CD8-positive, alpha-beta T cell (primary cell): ENCODE measurements at regions of chr19 and their contacts with region 1.

Region 1: GRCh38 chr19:49676690-49677231 is 310 bp upstream of the PRMT1 start:
- DNase-seq: peak; percentile 96 to 100 (median 98)
- ATAC-seq: peak; percentile 75
- H3K4me3 ChIP-seq: peak overlapping the region; percentile 83 to 99
- H3K4me3 Mint-ChIP-seq: peak overlapping the region; percentile 99
- H3K27ac ChIP-seq: peak overlapping the region; percentile 86 to 99
- H3K27ac Mint-ChIP-seq: peak overlapping the region; percentile 99
- H3K4me1 ChIP-seq: peaks cover 40% of the 10 kb centered on the region
- H3K4me1 Mint-ChIP-seq: peaks cover 43% of the 10 kb centered on the region
- H3K27me3 ChIP-seq: no peaks in the 10 kb centered on the region
- H3K27me3 Mint-ChIP-seq: no peaks in the 10 kb centered on the region
- CTCF ChIP-seq: no peak

Region 2: GRCh38 chr19:49391581-49392399 is 285.0 kb before region 1 on chr19:
- CTCF ChIA-PET with region 1: interaction called, 4 read pairs
- POLR2A ChIA-PET with region 1: no interaction called
- intact Hi-C with region 1: loop called (anchors 1 to 5 kb)
- DNase-seq: peak; percentile 61 to 89 (median 81)
- ATAC-seq: peak; percentile 80
- H3K4me3 ChIP-seq: no peak overlapping the region
- H3K4me3 Mint-ChIP-seq: no peak overlapping the region
- H3K27ac ChIP-seq: peak overlapping the region in 1 of 2 experiments; percentile 20
- H3K27ac Mint-ChIP-seq: peak overlapping the region; percentile 46
- H3K4me1 ChIP-seq: peaks cover 16% of the 10 kb centered on the region
- H3K4me1 Mint-ChIP-seq: peaks cover 11% of the 10 kb centered on the region
- H3K27me3 ChIP-seq: no peaks in the 10 kb centered on the region
- H3K27me3 Mint-ChIP-seq: no peaks in the 10 kb centered on the region
- CTCF ChIP-seq: peak; percentile 95

Region 3: DNA sequence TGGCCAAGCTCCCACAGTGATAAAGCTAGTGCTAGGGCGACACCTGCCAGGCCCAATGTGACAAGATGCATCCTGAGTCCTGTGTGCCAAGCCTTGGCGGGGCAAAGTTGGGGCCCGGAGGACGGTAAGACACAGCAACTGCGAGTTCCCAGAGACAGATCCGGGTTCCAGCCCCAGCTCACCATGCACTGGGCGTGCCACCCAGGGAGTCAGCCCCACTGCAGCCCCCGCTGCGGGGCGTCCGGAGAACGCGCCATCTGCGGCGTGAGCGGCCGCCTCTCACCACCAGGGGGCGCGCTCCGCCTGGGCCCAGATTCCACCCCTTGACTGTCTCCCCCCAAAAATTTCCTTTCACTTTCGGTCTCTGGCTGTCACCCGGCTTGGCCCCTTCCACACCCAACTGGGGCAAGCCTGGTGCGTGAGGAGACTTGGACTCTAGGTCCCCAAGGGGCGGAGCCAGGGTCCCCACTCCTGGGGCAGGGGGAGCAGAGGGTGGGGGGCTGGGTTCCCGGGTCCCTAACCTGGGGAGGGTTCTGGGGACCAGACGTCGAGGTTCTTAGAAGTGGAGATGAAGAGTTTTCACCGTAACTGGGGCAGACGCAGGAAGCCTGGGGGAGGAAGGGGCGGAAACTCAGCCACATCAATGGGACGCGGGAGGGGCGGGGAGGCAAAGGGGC is 202.8 kb before region 1 on chr19 and contains the start of gene FLT3LG:
- CTCF ChIA-PET with region 1: interaction called, 6 read pairs
- POLR2A ChIA-PET with region 1: interaction called, 4 read pairs
- intact Hi-C with region 1: loop called in 1 of 2 experiments (anchors 1 kb)
- DNase-seq: peak; percentile 83 to 97 (median 91)
- ATAC-seq: peak; percentile 58
- H3K4me3 ChIP-seq: peak within 1 kb of the TSS; percentile 88 to 98
- H3K4me3 Mint-ChIP-seq: peak within 1 kb of the TSS; percentile 91
- H3K27ac ChIP-seq: peak within 1 kb of the TSS; percentile 92 to 96
- H3K27ac Mint-ChIP-seq: peak within 1 kb of the TSS; percentile 98
- H3K4me1 ChIP-seq: peaks cover 53% of the 10 kb centered on the region
- H3K4me1 Mint-ChIP-seq: peaks cover 54% of the 10 kb centered on the region
- H3K27me3 ChIP-seq: no peaks in the 10 kb centered on the region
- H3K27me3 Mint-ChIP-seq: no peaks in the 10 kb centered on the region
- CTCF ChIP-seq: peak; percentile 83
- total RNA-seq, gene FLT3LG: 246 to 259 TPM

Region 4: GRCh38 chr19:49570138-49570856 is 106.5 kb before region 1 on chr19:
- CTCF ChIA-PET with region 1: interaction called, 59 read pairs
- POLR2A ChIA-PET with region 1: interaction called, 4 read pairs
- intact Hi-C with region 1: loop called in 1 of 2 experiments (anchors 2 kb)
- DNase-seq: peak in 8 of 9 experiments; percentile 54 to 94 (median 74)
- ATAC-seq: peak; percentile 36
- H3K4me3 ChIP-seq: no peak overlapping the region
- H3K4me3 Mint-ChIP-seq: peak overlapping the region; percentile 68
- H3K27ac ChIP-seq: no peak overlapping the region
- H3K27ac Mint-ChIP-seq: peak overlapping the region; percentile 89
- H3K4me1 ChIP-seq: peaks cover 59% of the 10 kb centered on the region
- H3K4me1 Mint-ChIP-seq: peaks cover 49% of the 10 kb centered on the region
- H3K27me3 ChIP-seq: no peaks in the 10 kb centered on the region
- H3K27me3 Mint-ChIP-seq: no peaks in the 10 kb centered on the region
- CTCF ChIP-seq: peak; percentile 100

Region 5: DNA sequence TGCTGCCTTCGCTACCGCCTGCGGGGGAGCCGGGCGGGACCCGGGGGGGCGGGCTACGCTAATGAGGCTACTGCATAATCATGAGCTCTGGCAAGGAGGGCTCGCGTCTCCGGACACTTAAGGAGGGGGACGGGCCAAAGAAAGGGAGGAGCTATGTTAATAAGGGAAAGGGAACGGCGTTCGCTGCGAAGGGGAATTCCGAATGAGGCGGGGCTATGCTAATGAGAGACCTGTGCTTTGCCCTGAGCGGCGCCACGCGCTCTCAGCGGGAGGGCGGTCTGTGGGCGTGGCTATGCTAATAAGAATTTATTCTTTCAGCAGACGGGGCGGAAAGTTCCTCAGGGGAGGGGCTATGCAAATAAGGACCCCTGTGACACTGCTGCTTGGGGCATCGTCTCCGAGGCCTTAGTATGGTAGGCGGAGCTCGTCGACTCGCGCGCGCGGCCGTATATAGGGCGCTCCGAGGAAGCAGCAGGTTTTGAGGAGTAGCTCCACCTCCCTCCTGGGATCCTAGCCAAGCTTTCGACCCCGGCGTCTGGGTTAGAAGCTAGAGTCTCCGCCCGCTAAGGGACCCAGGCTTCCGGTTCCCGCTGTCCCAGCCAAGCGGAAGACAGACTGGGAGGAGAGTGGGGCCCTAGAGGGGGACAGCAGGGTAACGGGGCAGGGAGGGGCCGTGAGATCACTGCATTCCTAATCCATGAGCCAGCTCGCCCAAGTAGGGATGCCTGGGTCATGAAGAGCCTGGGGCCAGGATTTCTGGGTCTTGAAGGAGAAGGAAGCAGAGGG is 36.5 kb before region 1 on chr19 and contains the start of gene RRAS:
- CTCF ChIA-PET with region 1: interaction called, 22 read pairs
- POLR2A ChIA-PET with region 1: interaction called, 8 read pairs
- intact Hi-C with region 1: loop called (anchors 1 kb)
- DNase-seq: peak; percentile 98 to 100 (median 99)
- ATAC-seq: peak; percentile 66
- H3K4me3 ChIP-seq: peak within 1 kb of the TSS; percentile 64 to 75
- H3K4me3 Mint-ChIP-seq: peak within 1 kb of the TSS; percentile 95
- H3K27ac ChIP-seq: peak within 1 kb of the TSS; percentile 64 to 98
- H3K27ac Mint-ChIP-seq: peak within 1 kb of the TSS; percentile 96
- H3K4me1 ChIP-seq: peaks cover 51% of the 10 kb centered on the region
- H3K4me1 Mint-ChIP-seq: peaks cover 58% of the 10 kb centered on the region
- H3K27me3 ChIP-seq: no peaks in the 10 kb centered on the region
- H3K27me3 Mint-ChIP-seq: no peaks in the 10 kb centered on the region
- CTCF ChIP-seq: no peak
- total RNA-seq, gene RRAS: 3.6 to 4.9 TPM

Region 6: DNA sequence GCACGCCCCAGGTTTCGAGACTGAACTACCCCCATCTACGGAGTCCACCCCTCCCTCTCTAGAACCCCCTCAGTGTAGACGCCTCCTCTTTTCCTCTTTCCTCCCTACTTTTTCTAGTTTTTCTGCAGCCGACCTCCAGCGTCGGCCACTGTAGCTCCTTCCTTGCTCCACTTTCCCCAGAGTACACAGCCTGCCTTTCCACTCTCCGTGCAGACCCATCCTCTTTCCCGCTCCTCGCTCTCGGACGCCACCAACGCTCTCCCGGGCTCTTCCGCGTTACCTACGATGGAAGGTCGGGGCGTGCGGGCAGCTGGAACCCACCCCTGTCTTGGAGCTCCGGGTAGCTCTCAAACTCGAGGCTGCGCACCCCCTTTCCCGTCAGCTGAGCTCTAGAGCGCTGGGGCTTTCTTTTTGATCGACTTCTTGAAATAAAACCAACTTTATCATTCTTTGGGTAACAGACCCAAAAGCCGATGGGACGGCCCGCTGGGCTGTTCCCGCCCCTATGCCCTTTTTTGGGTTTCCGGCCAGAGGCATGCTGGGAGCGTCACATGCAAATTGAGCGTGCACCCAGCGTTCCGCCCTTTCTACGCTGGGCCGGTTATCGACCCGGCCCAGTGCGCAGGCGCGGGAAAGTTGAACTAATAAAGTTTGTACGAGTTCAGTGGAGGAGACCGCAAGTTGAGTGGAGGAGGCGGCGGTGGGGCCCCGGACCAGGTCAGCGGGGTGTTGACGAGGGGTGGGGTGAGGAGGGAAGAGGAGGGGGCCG is 11.2 kb before region 1 on chr19 and contains the starts of genes BCL2L12 and IRF3:
- CTCF ChIA-PET with region 1: interaction called, 19 read pairs
- POLR2A ChIA-PET with region 1: interaction called, 29 read pairs
- intact Hi-C with region 1: loop called (anchors 1 kb)
- DNase-seq: peak; percentile 98 to 100 (median 99)
- ATAC-seq: peak; percentile 80
- H3K4me3 ChIP-seq: peak within 1 kb of the TSS; percentile 86 to 95
- H3K4me3 Mint-ChIP-seq: peak within 1 kb of the TSS; percentile 99
- H3K27ac ChIP-seq: peak within 1 kb of the TSS; percentile 77 to 93
- H3K27ac Mint-ChIP-seq: peak within 1 kb of the TSS; percentile 99
- H3K4me1 ChIP-seq: peaks cover 29% of the 10 kb centered on the region
- H3K4me1 Mint-ChIP-seq: peaks cover 38% of the 10 kb centered on the region
- H3K27me3 ChIP-seq: no peaks in the 10 kb centered on the region
- H3K27me3 Mint-ChIP-seq: no peaks in the 10 kb centered on the region
- CTCF ChIP-seq: no peak
- total RNA-seq, gene BCL2L12: 13.1 to 14.7 TPM
- total RNA-seq, gene IRF3: 92.0 to 99.5 TPM

Region 7: GRCh38 chr19:49877020-49877878 is 200.5 kb after region 1 on chr19 and contains the starts of genes AKT1S1 and TBC1D17:
- CTCF ChIA-PET with region 1: no interaction called
- POLR2A ChIA-PET with region 1: no interaction called
- intact Hi-C with region 1: loop called in 1 of 2 experiments (anchors 1 kb)
- DNase-seq: peak; percentile 96 to 100 (median 97)
- ATAC-seq: peak; percentile 60
- H3K4me3 ChIP-seq: peak within 1 kb of the TSS; percentile 88 to 97
- H3K4me3 Mint-ChIP-seq: no peak within 1 kb of the TSS
- H3K27ac ChIP-seq: peak within 1 kb of the TSS; percentile 97 to 98
- H3K27ac Mint-ChIP-seq: no peak within 1 kb of the TSS
- H3K4me1 ChIP-seq: peaks cover 22% of the 10 kb centered on the region
- H3K4me1 Mint-ChIP-seq: peaks cover 29% of the 10 kb centered on the region
- H3K27me3 ChIP-seq: no peaks in the 10 kb centered on the region
- H3K27me3 Mint-ChIP-seq: no peaks in the 10 kb centered on the region
- CTCF ChIP-seq: no peak
- total RNA-seq, gene AKT1S1: 12.6 to 14.1 TPM
- total RNA-seq, gene TBC1D17: 31.1 to 31.2 TPM